Body of pancreas (tissue), 4 donors: ENCODE measurements at regions of chr19 and their contacts with region 1.

Region 1: GRCh38 chr19:9934132-9934950 is 2.0 kb downstream of the OLFM2 start:
- DNase-seq: peak; percentile 68 to 85 (median 78)
- ATAC-seq: peak; percentile 77
- H3K4me3 ChIP-seq: no peak overlapping the region
- H3K27ac ChIP-seq: no peak overlapping the region
- H3K4me1 ChIP-seq: peaks cover 36% of the 10 kb centered on the region
- H3K27me3 ChIP-seq: no peaks in the 10 kb centered on the region
- CTCF ChIP-seq: peak; percentile 65 to 93 (median 83)
- POLR2A ChIP-seq: no peak

Region 2: GRCh38 chr19:10033614-10034013 is 99.3 kb after region 1 on chr19:
- intact Hi-C with region 1: loop called (anchors 5 kb)
- DNase-seq: no peak
- ATAC-seq: no peak
- H3K4me3 ChIP-seq: no peak overlapping the region
- H3K27ac ChIP-seq: no peak overlapping the region
- H3K4me1 ChIP-seq: peaks cover 33% of the 10 kb centered on the region
- H3K27me3 ChIP-seq: no peaks in the 10 kb centered on the region
- CTCF ChIP-seq: no peak
- POLR2A ChIP-seq: no peak

Region 3: DNA sequence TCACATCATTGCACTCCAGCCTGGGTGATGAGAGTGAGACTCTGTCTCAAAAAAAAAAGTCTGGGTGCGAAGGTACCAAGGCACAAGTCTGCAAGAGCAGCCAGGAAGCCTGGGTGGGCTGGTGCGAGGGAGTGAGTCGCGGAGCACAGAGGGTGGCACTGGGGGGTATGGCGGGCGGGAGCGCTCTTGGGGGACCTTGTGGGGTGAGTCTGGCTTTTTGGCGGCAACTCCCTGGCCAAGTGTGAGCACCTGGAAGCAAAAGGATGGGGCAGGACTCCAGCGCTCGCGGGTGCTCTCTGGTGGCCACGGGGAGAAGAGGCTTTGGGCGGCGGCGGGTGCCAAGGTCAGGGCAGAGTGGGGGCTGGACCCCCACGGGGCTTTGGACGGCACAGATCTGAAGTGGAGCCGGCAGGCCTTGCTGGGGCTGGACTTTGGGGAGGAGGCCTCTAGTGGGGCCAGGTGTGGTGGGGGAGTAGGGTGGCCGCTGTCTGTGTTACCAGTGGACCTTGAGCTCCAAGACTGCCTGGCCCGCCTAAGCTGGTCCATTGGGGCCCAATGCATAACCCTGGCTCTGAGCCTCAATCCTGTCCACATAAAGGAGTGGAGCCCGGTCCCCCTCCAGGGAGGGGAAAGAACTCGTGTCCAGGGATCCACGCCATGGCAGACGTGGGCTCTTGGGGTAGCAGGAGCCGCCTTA is 178.7 kb after region 1 on chr19:
- intact Hi-C with region 1: loop called (anchors 5 kb)
- DNase-seq: peak; percentile 56 to 71 (median 66)
- ATAC-seq: peak; percentile 66
- H3K4me3 ChIP-seq: no peak overlapping the region
- H3K27ac ChIP-seq: peak overlapping the region in 3 of 4 donors; percentile 27 to 57 (median 52)
- H3K4me1 ChIP-seq: peaks cover 15% of the 10 kb centered on the region
- H3K27me3 ChIP-seq: no peaks in the 10 kb centered on the region
- CTCF ChIP-seq: peak; percentile 54 to 79 (median 64)
- POLR2A ChIP-seq: no peak

Region 4: DNA sequence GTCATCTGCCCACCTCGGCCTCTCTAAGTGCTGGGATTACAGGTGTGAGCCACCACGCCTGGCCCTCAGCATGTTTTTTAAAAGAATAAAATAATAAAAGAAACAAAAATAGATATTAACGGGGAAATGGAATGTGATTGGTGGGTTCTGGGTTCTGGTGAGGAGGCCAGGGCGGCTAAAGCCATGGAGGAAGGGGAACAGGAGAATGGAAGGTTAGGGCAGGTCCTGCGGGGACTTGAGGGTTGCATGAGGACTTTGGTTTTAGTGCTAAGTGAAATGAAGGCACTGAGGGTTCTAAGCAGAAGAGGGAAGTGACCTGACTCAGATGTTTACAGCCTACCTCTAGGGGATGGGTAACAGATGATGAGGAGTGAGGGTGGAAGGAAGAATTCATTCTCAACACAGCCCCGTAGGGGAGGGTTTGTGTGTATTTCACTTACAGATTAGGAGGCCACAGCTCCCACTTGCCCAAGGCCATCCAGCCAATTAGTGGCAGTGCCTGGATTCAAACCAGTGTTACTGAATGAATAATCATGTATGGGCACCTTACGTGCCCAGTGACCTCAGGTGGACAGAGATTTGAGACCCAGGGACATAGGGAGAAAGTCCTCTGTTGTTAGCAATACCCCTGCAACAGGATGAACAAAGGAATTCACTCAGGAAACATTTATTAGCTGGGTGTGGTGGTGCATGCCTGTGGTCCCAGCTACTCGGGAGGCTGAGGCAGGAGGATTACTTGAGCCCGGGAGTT is 311.0 kb after region 1 on chr19:
- intact Hi-C with region 1: loop called (anchors 5 kb)
- DNase-seq: no peak
- ATAC-seq: no peak
- H3K4me3 ChIP-seq: no peak overlapping the region
- H3K27ac ChIP-seq: no peak overlapping the region
- H3K4me1 ChIP-seq: peaks cover 3% of the 10 kb centered on the region
- H3K27me3 ChIP-seq: no peaks in the 10 kb centered on the region
- CTCF ChIP-seq: no peak
- POLR2A ChIP-seq: no peak

Region 5: GRCh38 chr19:10388957-10389356 is 454.6 kb after region 1 on chr19:
- intact Hi-C with region 1: loop called (anchors 10 kb)
- DNase-seq: peak; percentile 88 to 94 (median 92)
- ATAC-seq: peak; percentile 79
- H3K4me3 ChIP-seq: no peak overlapping the region
- H3K27ac ChIP-seq: no peak overlapping the region
- H3K4me1 ChIP-seq: no peaks in the 10 kb centered on the region
- H3K27me3 ChIP-seq: no peaks in the 10 kb centered on the region
- CTCF ChIP-seq: peak; percentile 86 to 95 (median 89)
- POLR2A ChIP-seq: no peak